Activated B cell treated with CpG ODN at 0.5 μM for 24 hours (primary cell): ENCODE measurements at regions of chr2 and their contacts with region 1.

Region 1: GRCh38 chr2:235779444-235779896 is 285.6 kb downstream of the AGAP1 start:
- DNase-seq: no peak
- ATAC-seq: peak; percentile 34
- H3K4me3 Mint-ChIP-seq: no peak overlapping the region
- H3K27ac Mint-ChIP-seq: no peak overlapping the region
- H3K4me1 Mint-ChIP-seq: no peaks in the 10 kb centered on the region
- H3K27me3 Mint-ChIP-seq: peaks cover 17% of the 10 kb centered on the region
- CTCF ChIP-seq: no peak

Region 2: GRCh38 chr2:236180831-236181453 is 401.5 kb after region 1 on chr2:
- CTCF ChIA-PET with region 1: interaction called, 4 read pairs
- POLR2A ChIA-PET with region 1: no interaction called
- intact Hi-C with region 1: loop called (anchors 2 kb)
- DNase-seq: no peak
- ATAC-seq: no peak
- H3K4me3 Mint-ChIP-seq: no peak overlapping the region
- H3K27ac Mint-ChIP-seq: no peak overlapping the region
- H3K4me1 Mint-ChIP-seq: peaks cover 5% of the 10 kb centered on the region
- H3K27me3 Mint-ChIP-seq: peaks cover 51% of the 10 kb centered on the region
- CTCF ChIP-seq: no peak